HCT116 (cell line): ENCODE measurements at regions of chr20 and their contacts with region 1.

Region 1: DNA sequence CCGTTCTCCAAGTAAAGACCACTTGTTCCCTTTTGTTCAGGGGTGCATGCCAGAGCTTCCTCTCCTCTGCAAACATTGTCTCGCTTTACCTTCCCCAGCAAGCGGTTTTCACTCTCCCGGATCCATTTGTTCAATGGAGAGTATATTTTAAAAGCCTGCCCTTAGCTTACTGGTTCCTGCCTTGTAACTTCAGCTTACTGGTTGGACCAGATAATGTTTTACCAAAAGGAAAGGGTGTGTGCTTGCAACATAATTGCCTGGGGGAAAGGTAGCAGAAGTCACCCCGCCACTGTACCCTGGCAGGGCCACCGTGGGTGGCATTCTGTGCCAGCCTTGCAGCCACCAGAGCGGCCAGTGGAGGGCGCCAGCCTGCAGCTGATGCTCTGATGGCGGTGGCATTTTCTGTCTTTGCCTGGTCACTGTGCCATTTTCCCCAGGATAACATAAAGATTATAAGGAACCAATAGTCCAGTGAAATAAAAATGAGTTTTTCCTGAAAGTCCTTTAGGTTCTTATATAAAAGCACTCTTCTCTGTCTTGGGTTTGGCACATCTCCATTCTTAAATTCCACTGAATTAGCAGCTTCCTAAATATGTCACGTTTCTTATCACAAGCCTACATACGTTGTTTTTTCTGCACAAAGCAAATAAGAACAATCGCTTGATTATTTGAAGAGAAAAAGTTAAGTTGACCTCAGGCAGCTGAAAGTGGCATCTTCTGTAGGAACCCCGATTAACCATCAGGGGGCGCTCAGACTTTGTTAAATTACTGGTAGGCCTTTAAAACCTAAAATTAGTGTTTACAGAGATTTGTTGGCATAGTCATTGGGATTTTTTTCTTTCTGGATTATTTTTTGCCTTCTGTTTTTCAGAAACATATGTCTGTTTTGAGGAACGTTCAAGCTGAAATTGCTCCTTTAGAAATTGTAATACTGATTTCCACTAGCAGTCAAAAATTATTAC is 67.4 kb upstream of the XRN2 start:
- DNase-seq: peak; percentile 51
- ATAC-seq: peak; percentile 92
- H3K4me3 ChIP-seq: no peak overlapping the region
- H3K27ac ChIP-seq: no peak overlapping the region
- H3K4me1 ChIP-seq: peaks cover 0 to 6% of the 10 kb centered on the region in 2 experiments; a peak in 1 of 4 replicates
- H3K27me3 ChIP-seq: no peaks in the 10 kb centered on the region
- CTCF ChIP-seq: peak; percentile 84 to 97 (median 91); a peak in 5 of 6 replicates
- POLR2A ChIP-seq: no peak
- RAD21 ChIP-seq: peak; percentile 66

Region 2: DNA sequence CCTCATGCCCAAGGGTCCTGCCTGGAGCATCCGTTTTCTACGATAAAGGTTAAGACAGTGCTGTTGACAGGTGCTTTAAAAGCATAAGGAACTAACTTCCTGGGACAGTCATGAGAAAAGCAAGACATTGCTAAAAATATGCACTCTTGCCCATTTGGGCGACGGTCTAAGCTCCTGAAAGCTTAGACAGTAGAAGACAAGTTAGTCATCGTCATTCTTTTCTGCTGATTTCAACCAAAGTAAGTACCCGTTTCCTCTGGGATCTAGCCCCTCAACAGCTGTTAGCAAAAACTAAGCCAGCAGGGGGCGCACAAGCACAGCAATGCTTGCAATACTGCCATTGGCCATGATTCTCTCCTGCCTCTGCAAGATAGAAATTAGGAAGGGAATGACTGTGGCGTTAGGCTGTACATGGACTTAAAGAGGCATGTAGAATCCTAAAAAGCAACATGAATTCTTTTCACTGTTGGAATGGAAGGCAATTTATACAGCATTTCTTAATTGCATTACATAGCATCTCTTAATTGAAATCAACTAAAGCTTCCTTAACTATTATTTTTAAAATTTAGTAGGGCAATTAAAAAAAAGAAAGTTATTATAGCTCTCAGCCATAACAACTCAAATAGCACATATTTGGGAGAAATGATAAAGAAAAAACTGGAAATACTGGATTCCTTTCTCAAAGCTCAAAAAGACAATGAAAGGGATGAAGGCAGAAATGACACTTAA is 375.5 kb before region 1 on chr20:
- CTCF ChIA-PET with region 1: interaction called, 5 read pairs
- POLR2A ChIA-PET with region 1: no interaction called
- RAD21 ChIA-PET with region 1: no interaction called
- intact Hi-C with region 1: loop called (anchors 5 kb)
- DNase-seq: peak; percentile 69
- ATAC-seq: peak; percentile 96
- H3K4me3 ChIP-seq: no peak overlapping the region
- H3K27ac ChIP-seq: no peak overlapping the region
- H3K4me1 ChIP-seq: no peaks in the 10 kb centered on the region
- H3K27me3 ChIP-seq: no peaks in the 10 kb centered on the region
- CTCF ChIP-seq: peak; percentile 80 to 99 (median 94)
- POLR2A ChIP-seq: no peak
- RAD21 ChIP-seq: peak; percentile 74

Region 3: DNA sequence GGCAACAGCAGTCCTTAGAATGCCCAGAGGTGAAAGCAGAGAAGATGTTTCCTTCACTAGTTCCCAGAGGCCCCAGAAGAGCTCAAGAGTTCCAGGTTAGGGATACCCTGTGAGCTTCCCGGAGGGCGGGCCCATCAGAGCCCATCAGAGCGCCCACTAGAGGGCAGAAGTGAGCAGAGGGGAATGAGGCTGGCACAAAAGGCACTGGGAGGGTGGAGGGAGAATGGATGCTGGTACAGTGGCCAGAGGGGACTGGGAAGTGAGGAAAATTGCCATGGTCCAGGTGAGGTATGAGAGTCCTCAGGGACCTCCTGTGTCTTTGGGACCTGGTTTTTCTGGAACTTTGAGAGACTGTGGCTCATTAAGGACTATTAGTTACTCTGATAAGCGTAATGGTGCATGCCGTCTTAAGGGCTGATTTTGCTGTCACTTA is 186.9 kb before region 1 on chr20:
- CTCF ChIA-PET with region 1: interaction called, 15 read pairs
- POLR2A ChIA-PET with region 1: no interaction called
- RAD21 ChIA-PET with region 1: no interaction called
- intact Hi-C with region 1: no loop called
- DNase-seq: peak; percentile 28
- ATAC-seq: peak; percentile 99
- H3K4me3 ChIP-seq: no peak overlapping the region
- H3K27ac ChIP-seq: no peak overlapping the region
- H3K4me1 ChIP-seq: no peaks in the 10 kb centered on the region
- H3K27me3 ChIP-seq: no peaks in the 10 kb centered on the region; the same call in 1 of the 2 replicates
- CTCF ChIP-seq: peak; percentile 54 to 98 (median 98)
- POLR2A ChIP-seq: no peak
- RAD21 ChIP-seq: peak; percentile 59

Region 4: GRCh38 chr20:21312813-21313474 is 77.2 kb after region 1 on chr20:
- CTCF ChIA-PET with region 1: no interaction called
- POLR2A ChIA-PET with region 1: no interaction called
- RAD21 ChIA-PET with region 1: no interaction called
- intact Hi-C with region 1: no loop called
- DNase-seq: no peak
- ATAC-seq: no peak
- H3K4me3 ChIP-seq: no peak overlapping the region
- H3K27ac ChIP-seq: no peak overlapping the region
- H3K4me1 ChIP-seq: no peaks in the 10 kb centered on the region
- H3K27me3 ChIP-seq: no peaks in the 10 kb centered on the region
- CTCF ChIP-seq: no peak
- POLR2A ChIP-seq: no peak
- RAD21 ChIP-seq: no peak

Region 5: GRCh38 chr20:21490095-21490494 is 254.3 kb after region 1 on chr20:
- CTCF ChIA-PET with region 1: interaction called, 28 read pairs
- POLR2A ChIA-PET with region 1: no interaction called
- RAD21 ChIA-PET with region 1: interaction called, 4 to 5 read pairs
- intact Hi-C with region 1: loop called (anchors 1 kb)
- DNase-seq: no peak
- ATAC-seq: peak; percentile 27
- H3K4me3 ChIP-seq: no peak overlapping the region
- H3K27ac ChIP-seq: no peak overlapping the region
- H3K4me1 ChIP-seq: no peaks in the 10 kb centered on the region
- H3K27me3 ChIP-seq: peaks cover 25% of the 10 kb centered on the region
- CTCF ChIP-seq: peak; percentile 29 to 49 (median 42); a peak in 5 of 6 replicates
- POLR2A ChIP-seq: no peak
- RAD21 ChIP-seq: peak; percentile 41; the same call in 1 of the 2 replicates

Region 6: GRCh38 chr20:21505161-21505809 is 269.5 kb after region 1 on chr20:
- CTCF ChIA-PET with region 1: interaction called, 105 read pairs
- POLR2A ChIA-PET with region 1: no interaction called
- RAD21 ChIA-PET with region 1: interaction called, 4 to 13 read pairs
- intact Hi-C with region 1: loop called (anchors 1 kb)
- DNase-seq: peak; percentile 28
- ATAC-seq: peak; percentile 60
- H3K4me3 ChIP-seq: peak overlapping the region; percentile 60 to 71
- H3K27ac ChIP-seq: peak overlapping the region; percentile 85
- H3K4me1 ChIP-seq: peaks cover 3 to 20% of the 10 kb centered on the region in 2 experiments; a peak in 3 of 4 replicates
- H3K27me3 ChIP-seq: no peaks in the 10 kb centered on the region
- CTCF ChIP-seq: peak; percentile 90 to 98 (median 95)
- POLR2A ChIP-seq: no peak
- RAD21 ChIP-seq: peak; percentile 96

Region 7: DNA sequence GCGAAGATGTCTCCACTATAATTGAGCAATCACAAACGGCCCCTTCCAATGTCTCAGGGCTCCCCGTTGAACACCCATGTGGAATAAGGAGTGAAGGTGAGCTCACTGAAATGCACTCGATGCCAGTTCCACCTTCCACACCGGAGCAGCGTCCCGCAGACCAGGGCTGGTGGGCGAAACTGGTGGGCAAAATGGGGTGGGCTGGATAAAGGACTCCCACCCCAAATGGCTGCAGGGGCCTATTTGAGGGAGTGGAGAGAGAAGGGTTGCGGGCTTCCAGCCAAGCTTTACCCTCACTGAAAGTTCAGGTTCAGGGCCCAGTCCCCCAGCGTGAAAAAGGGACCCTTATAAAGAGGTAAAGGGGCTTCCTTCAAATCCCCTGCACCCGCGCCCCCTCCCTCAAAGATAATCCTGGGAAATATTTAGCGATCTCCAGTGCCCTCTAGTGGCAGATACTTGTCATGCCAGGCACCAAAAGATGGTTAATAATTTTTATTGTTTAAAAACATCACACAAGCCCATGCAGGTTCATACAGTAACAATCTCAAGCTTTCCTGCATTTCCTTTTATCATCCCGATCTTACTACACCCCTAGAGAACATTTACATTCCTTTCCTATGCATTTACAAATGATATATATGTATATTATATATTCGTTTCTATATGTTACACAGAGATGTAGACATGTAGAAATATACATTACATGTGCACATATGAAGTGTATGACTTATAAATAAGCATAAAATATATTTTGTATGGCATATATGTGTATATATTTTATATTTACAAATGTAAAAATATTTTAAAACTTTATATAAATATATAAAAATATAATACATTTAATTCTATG is 336.3 kb after region 1 on chr20:
- CTCF ChIA-PET with region 1: interaction called, 3 read pairs
- POLR2A ChIA-PET with region 1: no interaction called
- RAD21 ChIA-PET with region 1: no interaction called
- intact Hi-C with region 1: loop called (anchors 5 kb)
- DNase-seq: no peak
- ATAC-seq: peak; percentile 25; the same call in 1 of the 2 replicates
- H3K4me3 ChIP-seq: no peak overlapping the region
- H3K27ac ChIP-seq: no peak overlapping the region
- H3K4me1 ChIP-seq: no peaks in the 10 kb centered on the region
- H3K27me3 ChIP-seq: peaks cover 24% of the 10 kb centered on the region
- CTCF ChIP-seq: peak; percentile 54 to 92 (median 77); a peak in 5 of 6 replicates
- POLR2A ChIP-seq: no peak
- RAD21 ChIP-seq: peak; percentile 68

Region 8: GRCh38 chr20:21615617-21616080 is 379.9 kb after region 1 on chr20:
- CTCF ChIA-PET with region 1: interaction called, 5 read pairs
- POLR2A ChIA-PET with region 1: no interaction called
- RAD21 ChIA-PET with region 1: no interaction called
- intact Hi-C with region 1: loop called (anchors 5 kb)
- DNase-seq: peak; percentile 26
- ATAC-seq: peak; percentile 98
- H3K4me3 ChIP-seq: no peak overlapping the region
- H3K27ac ChIP-seq: no peak overlapping the region
- H3K4me1 ChIP-seq: no peaks in the 10 kb centered on the region; a peak in 1 of 4 replicates
- H3K27me3 ChIP-seq: peaks cover 4% of the 10 kb centered on the region; the same call in 1 of the 2 replicates
- CTCF ChIP-seq: peak; percentile 32 to 90 (median 85); a peak in 5 of 6 replicates
- POLR2A ChIP-seq: no peak
- RAD21 ChIP-seq: peak; percentile 68

Region 9: GRCh38 chr20:21702553-21703470 is 467.0 kb after region 1 on chr20:
- CTCF ChIA-PET with region 1: no interaction called
- POLR2A ChIA-PET with region 1: no interaction called
- RAD21 ChIA-PET with region 1: no interaction called
- intact Hi-C with region 1: no loop called
- DNase-seq: no peak
- ATAC-seq: peak; percentile 69
- H3K4me3 ChIP-seq: no peak overlapping the region
- H3K27ac ChIP-seq: no peak overlapping the region
- H3K4me1 ChIP-seq: no peaks in the 10 kb centered on the region
- H3K27me3 ChIP-seq: peaks cover 8% of the 10 kb centered on the region; the same call in 1 of the 2 replicates
- CTCF ChIP-seq: peak in 2 of 3 experiments; percentile 24 to 41; a peak in 4 of 6 replicates
- POLR2A ChIP-seq: no peak
- RAD21 ChIP-seq: peak; percentile 23; the same call in 1 of the 2 replicates